CD14-positive monocyte (primary cell): ENCODE measurements at regions of chr3 and their contacts with region 1.

Region 1: DNA sequence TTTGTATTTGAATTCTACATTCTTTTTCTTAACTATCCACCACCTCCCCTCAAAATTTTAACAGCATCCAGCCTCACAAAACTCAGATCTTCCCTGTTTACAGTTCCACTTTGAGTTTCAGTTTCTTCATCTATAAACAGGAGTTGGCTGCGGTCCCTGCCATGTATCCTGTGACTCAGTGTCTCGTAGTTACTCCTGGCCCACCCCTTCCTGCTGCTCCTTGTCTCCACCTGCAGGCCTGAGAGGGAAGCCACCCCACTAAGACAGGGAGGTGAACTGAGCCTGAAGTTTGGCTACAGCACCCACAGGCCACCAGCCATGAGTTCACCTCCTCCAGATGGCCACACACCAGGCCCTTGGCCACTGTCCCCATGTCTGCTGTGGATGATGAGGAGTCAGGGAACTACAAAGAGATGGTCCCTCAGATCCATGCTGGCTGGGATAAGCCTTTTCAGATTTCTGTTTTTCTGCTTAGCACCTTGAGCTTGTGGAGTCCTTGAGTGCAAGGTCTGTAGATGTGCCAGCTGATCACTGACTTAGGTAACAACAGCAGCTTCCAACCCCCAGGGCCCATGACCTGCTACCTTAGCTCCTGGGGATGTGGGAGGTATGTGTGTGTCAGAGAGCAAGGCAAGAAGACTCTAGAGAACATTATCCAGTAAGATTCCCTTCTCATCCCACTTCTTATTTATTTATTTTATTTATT is 37.5 kb downstream of the CD86 start:
- DNase-seq: peak; percentile 72 to 90 (median 89)
- H3K4me3 ChIP-seq: peak overlapping the region in 1 of 3 experiments; percentile 27
- H3K4me3 Mint-ChIP-seq: peak overlapping the region; percentile 49 to 76
- H3K27ac ChIP-seq: peak overlapping the region; percentile 57 to 79
- H3K27ac Mint-ChIP-seq: peak overlapping the region; percentile 86 to 96 (median 94)
- H3K4me1 ChIP-seq: peaks cover 44 to 50% of the 10 kb centered on the region in 2 donors
- H3K4me1 Mint-ChIP-seq: peaks cover 50% of the 10 kb centered on the region
- H3K27me3 ChIP-seq: no peaks in the 10 kb centered on the region
- H3K27me3 Mint-ChIP-seq: peaks cover 0 to 3% (median 0%) of the 10 kb centered on the region in 3 donors
- CTCF ChIP-seq: peak; percentile 80

Region 2: DNA sequence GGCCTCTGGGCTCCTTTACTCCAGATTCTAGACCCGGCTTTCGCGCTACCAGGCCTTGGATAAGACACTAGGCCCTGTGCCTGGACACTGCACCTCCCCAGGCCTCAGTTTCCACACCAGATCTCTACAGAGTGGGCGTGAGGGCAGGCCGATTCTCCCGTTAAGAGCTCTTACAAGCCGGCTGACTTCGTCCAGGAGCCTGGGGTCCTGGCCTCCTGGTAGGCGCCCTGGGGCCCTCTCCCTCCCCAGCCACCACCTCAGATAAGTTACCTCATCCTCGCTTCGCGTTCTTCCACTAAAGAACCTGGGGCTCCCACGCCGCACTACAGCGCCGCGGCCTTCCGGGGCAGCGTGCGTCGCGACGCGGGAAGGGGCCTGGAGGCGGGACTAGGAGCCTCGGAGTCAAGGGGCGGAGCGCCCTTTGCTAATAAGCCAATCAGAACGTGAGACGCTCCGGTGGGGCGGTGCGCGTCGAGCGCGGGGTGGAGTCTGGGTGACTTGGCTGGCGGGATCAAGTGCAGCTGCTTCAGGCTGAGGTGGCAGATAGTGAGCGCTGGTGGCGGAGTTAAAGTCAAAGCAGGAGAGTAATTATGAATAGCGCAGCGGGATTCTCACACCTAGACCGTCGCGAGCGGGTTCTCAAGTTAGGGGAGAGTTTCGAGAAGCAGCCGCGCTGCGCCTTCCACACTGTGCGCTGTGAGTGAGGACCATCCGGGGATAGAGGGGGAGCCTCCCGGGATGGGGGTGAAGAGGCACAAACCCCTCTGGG is 257.7 kb before region 1 on chr3 and contains the starts of genes EAF2 and IQCB1:
- intact Hi-C with region 1: loop called in 1 of 2 experiments (anchors 5 kb)
- DNase-seq: peak; percentile 94 to 97 (median 96)
- H3K4me3 ChIP-seq: peak within 1 kb of the TSS; percentile 83 to 97 (median 93)
- H3K4me3 Mint-ChIP-seq: peak within 1 kb of the TSS; percentile 96 to 97
- H3K27ac ChIP-seq: peak within 1 kb of the TSS; percentile 75 to 90
- H3K27ac Mint-ChIP-seq: peak within 1 kb of the TSS; percentile 88 to 97 (median 94)
- H3K4me1 ChIP-seq: peaks cover 18 to 44% of the 10 kb centered on the region in 2 donors
- H3K4me1 Mint-ChIP-seq: peaks cover 52% of the 10 kb centered on the region
- H3K27me3 ChIP-seq: no peaks in the 10 kb centered on the region
- H3K27me3 Mint-ChIP-seq: peaks cover 0 to 2% (median 0%) of the 10 kb centered on the region in 3 donors
- CTCF ChIP-seq: no peak
- polyA plus RNA-seq, gene EAF2: 31.5 to 91.6 (median 75.7) TPM
- polyA plus RNA-seq, gene IQCB1: 6.0 to 27.7 (median 7.5) TPM

Region 3: GRCh38 chr3:121979734-121980449 is 112.7 kb before region 1 on chr3:
- intact Hi-C with region 1: no loop called
- DNase-seq: peak in 2 of 3 donors; percentile 11 to 27
- H3K4me3 ChIP-seq: no peak overlapping the region
- H3K4me3 Mint-ChIP-seq: no peak overlapping the region
- H3K27ac ChIP-seq: peak overlapping the region in 1 of 2 donors; percentile 18
- H3K27ac Mint-ChIP-seq: peak overlapping the region in 3 of 7 donors; percentile 23 to 80 (median 53)
- H3K4me1 ChIP-seq: peaks cover 11 to 15% of the 10 kb centered on the region in 2 donors
- H3K4me1 Mint-ChIP-seq: peaks cover 23% of the 10 kb centered on the region
- H3K27me3 ChIP-seq: no peaks in the 10 kb centered on the region
- H3K27me3 Mint-ChIP-seq: no peaks in the 10 kb centered on the region
- CTCF ChIP-seq: no peak

Region 4: DNA sequence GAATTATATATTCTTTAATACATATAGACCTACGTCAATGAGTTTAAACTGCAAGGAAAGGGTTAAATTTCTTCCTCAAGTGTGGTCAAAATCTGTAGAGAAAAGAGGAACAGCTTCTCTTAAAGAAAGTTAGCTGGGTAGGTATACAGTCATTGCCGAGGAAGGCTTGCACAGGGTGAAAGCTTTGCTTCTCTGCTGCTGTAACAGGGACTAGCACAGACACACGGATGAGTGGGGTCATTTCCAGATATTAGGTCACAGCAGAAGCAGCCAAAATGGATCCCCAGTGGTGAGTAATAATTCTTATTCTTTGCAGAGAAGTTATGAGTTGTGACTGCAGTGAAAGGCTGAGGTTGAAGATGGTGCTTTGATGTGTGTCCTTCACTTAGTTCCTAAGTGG is 37.4 kb before region 1 on chr3 and contains the start of gene CD86:
- intact Hi-C with region 1: loop called (anchors 5 kb)
- DNase-seq: peak; percentile 90 to 94 (median 94)
- H3K4me3 ChIP-seq: peak within 1 kb of the TSS; percentile 72 to 98 (median 89)
- H3K4me3 Mint-ChIP-seq: peak within 1 kb of the TSS; percentile 94 to 97
- H3K27ac ChIP-seq: peak within 1 kb of the TSS; percentile 49 to 85
- H3K27ac Mint-ChIP-seq: peak within 1 kb of the TSS; percentile 93 to 99 (median 94)
- H3K4me1 ChIP-seq: peaks cover 38 to 53% of the 10 kb centered on the region in 2 donors
- H3K4me1 Mint-ChIP-seq: peaks cover 48% of the 10 kb centered on the region
- H3K27me3 ChIP-seq: no peaks in the 10 kb centered on the region
- H3K27me3 Mint-ChIP-seq: peaks cover 0 to 4% (median 2%) of the 10 kb centered on the region in 3 donors
- CTCF ChIP-seq: no peak
- polyA plus RNA-seq, gene CD86: 75.7 to 321 (median 273) TPM